ENCODE measurements at regions of chr10 and their contacts with region 1.

Region 1: GRCh38 chr10:36759141-36759805 is 366.1 kb upstream of the ANKRD30A start:
- DNase-seq: no peak
- H3K4me3 ChIP-seq: no peak overlapping the region
- H3K27ac ChIP-seq: no peak overlapping the region
- H3K4me1 ChIP-seq: peaks cover 5% of the 10 kb centered on the region
- H3K27me3 ChIP-seq: no peaks in the 10 kb centered on the region
- CTCF ChIP-seq: no peak

Region 2: DNA sequence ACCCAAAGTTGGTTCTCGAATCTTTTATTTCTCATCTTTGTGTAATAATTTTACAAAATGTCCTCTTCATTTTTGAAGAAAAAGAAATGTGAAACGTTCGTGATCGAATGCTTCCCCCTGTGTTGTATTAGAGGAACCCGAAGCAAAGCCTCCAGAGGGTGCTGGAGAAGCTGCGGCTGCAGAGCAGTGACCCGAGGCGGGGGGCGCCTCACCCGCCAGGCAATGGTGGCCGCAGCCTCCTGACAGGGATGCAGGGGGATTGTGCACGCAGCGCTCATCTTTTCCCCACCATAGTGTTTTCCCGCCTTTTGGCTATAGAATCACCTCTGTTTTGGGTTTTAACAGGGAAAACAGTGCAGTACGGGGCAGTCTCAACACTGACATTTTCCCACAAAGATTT is 58.6 kb after region 1 on chr10:
- CTCF ChIA-PET with region 1: interaction called, 11 read pairs
- POLR2A ChIA-PET with region 1: no interaction called
- intact Hi-C with region 1: no loop called
- DNase-seq: no peak
- H3K4me3 ChIP-seq: no peak overlapping the region
- H3K27ac ChIP-seq: no peak overlapping the region
- H3K4me1 ChIP-seq: no peaks in the 10 kb centered on the region
- H3K27me3 ChIP-seq: no peaks in the 10 kb centered on the region
- CTCF ChIP-seq: no peak